Activated T-helper 1 cell treated with anti-CD3 and anti-CD28 coated beads, Interleukin-12 subunit alpha, Interleukin-12 subunit beta, Interleukin-2, Interleukin-4 antibody, amounts not matched to agents 30 ng/mL and 10 ng/mL and 1 ng/mL, durations not matched to agents 14 hours and 24 hours and 36 hours (primary cell): ENCODE measurements at regions of chr12 and their contacts with region 1.

Region 1: GRCh38 chr12:28223025-28223554 is 32.8 kb downstream of the CCDC91 start:
- DNase-seq: no peak
- H3K4me3 Mint-ChIP-seq: peak overlapping the region; percentile 9
- H3K27ac Mint-ChIP-seq: peak overlapping the region; percentile 27
- H3K4me1 Mint-ChIP-seq: peaks cover 40% of the 10 kb centered on the region
- H3K27me3 Mint-ChIP-seq: peaks cover 3% of the 10 kb centered on the region

Region 2: DNA sequence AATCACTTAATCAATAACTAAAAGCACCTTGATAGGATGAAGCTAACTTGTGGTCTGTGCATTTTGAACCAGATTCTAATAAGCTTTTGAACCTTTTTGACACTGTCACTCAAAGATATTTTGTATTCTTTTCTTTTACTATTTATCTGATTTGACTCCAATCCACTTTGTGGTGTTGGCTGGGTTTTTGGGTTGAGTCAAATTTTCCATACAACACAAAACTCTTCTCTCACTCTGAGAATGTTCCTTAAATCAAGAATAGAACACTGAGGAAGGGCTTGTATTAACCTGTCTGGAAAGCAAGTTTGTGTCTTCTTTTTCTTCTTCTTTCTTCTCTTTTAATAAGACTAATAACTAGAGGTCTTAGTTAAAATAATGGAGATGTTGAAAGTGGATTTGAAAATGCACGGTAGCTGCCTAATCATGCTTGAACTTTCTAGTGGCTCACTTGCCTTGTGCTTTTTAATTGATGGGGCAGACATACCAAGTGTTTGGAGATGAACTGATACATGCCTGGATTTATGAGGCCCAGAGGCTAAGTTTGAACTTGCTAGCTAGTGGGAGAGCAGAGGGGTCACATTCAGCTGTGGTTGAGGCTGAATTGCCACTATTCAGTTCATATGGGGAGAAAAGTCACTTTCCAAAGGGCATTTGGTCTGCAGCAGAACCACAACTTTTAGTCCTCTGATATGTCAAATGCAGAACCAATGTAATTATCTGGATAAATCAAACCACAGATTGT is 157.0 kb before region 1 on chr12:
- intact Hi-C with region 1: loop called (anchors 1 kb)
- DNase-seq: no peak
- H3K4me3 Mint-ChIP-seq: no peak overlapping the region
- H3K27ac Mint-ChIP-seq: no peak overlapping the region
- H3K4me1 Mint-ChIP-seq: peaks cover 17% of the 10 kb centered on the region
- H3K27me3 Mint-ChIP-seq: peaks cover 6% of the 10 kb centered on the region

Region 3: DNA sequence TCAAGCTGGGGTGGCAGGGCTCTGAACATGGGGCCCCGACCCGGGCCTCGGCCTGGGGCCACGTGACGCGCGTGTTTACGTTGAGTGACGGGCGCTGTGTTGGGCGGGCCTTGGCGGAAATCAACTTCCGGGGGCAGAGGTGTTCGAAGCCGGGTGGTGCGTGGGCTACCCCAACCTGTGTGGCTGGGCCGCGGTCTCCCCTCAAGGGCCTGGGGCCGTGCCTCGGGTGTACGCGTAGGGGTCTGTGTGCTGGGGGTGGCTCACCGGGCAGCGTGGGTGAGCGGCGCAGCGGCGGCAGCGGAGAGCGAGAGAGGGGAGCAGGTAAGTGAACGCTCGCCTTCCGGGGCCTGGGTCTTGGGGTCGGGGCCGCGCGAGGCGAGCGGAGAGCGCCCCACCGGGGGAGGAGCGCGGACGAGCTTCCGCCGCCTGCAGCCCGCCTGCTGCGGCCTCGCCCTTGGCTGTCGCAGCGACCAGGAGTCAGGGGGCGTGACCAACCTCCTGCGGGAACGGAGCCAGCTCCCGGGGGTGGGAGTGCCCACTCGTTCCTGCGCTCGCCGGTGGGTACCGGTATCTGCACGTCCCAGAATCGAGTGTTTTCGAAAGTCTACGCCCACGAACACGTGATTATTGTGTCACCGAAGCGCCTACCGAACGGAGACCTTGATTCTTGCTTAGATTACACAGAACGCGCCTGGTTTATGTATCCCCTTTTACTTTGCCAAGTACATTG is 32.6 kb before region 1 on chr12 and contains the start of gene CCDC91:
- intact Hi-C with region 1: loop called (anchors 1 kb)
- DNase-seq: peak; percentile 79
- H3K4me3 Mint-ChIP-seq: peak within 1 kb of the TSS; percentile 91
- H3K27ac Mint-ChIP-seq: peak within 1 kb of the TSS; percentile 96
- H3K4me1 Mint-ChIP-seq: peaks cover 39% of the 10 kb centered on the region
- H3K27me3 Mint-ChIP-seq: no peaks in the 10 kb centered on the region
- total RNA-seq, gene CCDC91: 12.9 and 15.0 TPM in 2 replicates